T-cell (primary cell): ENCODE measurements at regions of chr4 and their contacts with region 1.

Region 1: DNA sequence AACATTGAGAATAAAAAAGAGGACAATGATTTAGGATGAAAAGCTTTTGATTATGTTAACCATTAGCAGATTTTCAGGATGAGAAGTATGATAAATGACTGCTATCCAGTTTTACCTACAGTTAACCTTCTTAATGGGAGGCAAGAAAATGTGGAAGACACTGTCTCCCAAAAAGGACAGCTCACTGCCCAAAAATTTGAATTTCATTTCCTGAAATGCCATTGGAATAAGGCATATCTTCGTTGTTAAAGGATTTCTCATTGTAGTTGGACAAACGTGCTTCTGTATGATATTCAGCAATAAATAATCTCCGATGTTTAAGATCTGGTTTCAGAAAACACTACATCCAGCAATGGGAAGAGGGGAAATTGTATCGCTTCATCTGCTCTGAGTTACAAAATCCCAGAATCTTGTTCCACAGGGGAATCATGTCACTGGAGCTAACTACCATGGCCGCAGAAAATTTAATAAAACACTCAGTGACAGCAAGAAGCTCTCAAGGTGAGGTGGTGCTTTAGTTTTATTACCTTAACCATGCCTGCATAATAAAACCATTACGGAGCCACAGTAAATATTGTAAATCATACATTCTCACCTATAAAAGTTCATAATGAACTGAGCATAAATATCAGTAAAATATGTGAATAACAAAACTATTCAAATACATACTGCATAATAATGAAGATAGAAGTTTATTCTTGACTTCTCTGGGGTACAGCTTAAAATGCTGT is 552.3 kb downstream of the PCDH7 start:
- DNase-seq: no peak
- ATAC-seq: no peak
- H3K4me3 ChIP-seq: no peak overlapping the region
- H3K4me3 Mint-ChIP-seq: no peak overlapping the region
- H3K27ac ChIP-seq: no peak overlapping the region
- H3K27ac Mint-ChIP-seq: no peak overlapping the region
- H3K4me1 ChIP-seq: no peaks in the 10 kb centered on the region
- H3K4me1 Mint-ChIP-seq: no peaks in the 10 kb centered on the region
- H3K27me3 ChIP-seq: no peaks in the 10 kb centered on the region
- H3K27me3 Mint-ChIP-seq: no peaks in the 10 kb centered on the region

Region 2: GRCh38 chr4:31246856-31247255 is 25.6 kb before region 1 on chr4:
- CTCF ChIA-PET with region 1: no interaction called
- POLR2A ChIA-PET with region 1: interaction called in 1 of 2 experiments, 10 read pairs
- DNase-seq: no peak
- ATAC-seq: no peak
- H3K4me3 ChIP-seq: no peak overlapping the region
- H3K4me3 Mint-ChIP-seq: no peak overlapping the region
- H3K27ac ChIP-seq: no peak overlapping the region
- H3K27ac Mint-ChIP-seq: no peak overlapping the region
- H3K4me1 ChIP-seq: no peaks in the 10 kb centered on the region
- H3K4me1 Mint-ChIP-seq: no peaks in the 10 kb centered on the region
- H3K27me3 ChIP-seq: no peaks in the 10 kb centered on the region
- H3K27me3 Mint-ChIP-seq: no peaks in the 10 kb centered on the region